ENCODE measurements at regions of chr11 and their contacts with region 1.

Region 1: DNA sequence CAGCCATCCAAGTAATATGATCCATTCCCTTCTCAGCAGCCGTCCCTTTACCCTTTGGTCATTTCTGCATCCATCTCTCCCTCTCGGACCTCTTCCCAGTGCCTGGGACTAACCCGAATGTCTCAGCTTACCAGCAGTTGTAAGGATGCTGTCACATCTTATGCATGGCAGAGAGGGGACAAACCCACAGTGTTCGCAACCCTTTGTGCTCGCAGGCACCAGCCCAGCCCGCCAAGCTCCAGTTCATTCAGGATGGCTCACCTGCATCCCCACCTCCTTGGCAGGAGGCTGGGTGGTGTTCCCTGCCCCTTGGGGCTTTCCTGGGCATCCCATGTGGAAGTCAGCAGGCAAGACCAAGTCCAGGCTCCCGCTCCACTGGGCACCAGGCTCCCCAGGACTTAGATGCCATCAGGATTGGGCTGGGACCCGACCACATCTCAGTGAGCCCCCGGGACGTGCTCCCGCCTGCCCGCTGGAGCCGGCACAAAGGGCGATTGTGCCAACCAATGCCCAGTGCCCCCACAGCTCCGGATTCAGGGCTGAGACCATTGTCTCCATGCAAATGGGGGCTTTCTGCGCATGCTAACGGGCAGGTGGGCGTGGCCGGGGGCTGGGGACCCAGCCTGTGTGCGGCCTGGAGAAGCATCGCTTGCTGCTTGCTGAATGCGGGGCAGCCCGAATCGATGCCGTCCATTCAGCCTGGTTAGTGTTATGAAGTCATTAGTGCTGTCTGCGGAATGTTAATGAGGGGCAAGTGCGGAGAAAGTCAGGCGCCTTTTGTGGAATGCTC is 108.6 kb downstream of the KCNQ1OT1 start:
- DNase-seq: no peak
- H3K4me3 ChIP-seq: no peak overlapping the region
- H3K27ac ChIP-seq: no peak overlapping the region
- H3K4me1 ChIP-seq: no peaks in the 10 kb centered on the region
- H3K27me3 ChIP-seq: no peaks in the 10 kb centered on the region
- CTCF ChIP-seq: no peak
- POLR2A ChIP-seq: no peak

Region 2: DNA sequence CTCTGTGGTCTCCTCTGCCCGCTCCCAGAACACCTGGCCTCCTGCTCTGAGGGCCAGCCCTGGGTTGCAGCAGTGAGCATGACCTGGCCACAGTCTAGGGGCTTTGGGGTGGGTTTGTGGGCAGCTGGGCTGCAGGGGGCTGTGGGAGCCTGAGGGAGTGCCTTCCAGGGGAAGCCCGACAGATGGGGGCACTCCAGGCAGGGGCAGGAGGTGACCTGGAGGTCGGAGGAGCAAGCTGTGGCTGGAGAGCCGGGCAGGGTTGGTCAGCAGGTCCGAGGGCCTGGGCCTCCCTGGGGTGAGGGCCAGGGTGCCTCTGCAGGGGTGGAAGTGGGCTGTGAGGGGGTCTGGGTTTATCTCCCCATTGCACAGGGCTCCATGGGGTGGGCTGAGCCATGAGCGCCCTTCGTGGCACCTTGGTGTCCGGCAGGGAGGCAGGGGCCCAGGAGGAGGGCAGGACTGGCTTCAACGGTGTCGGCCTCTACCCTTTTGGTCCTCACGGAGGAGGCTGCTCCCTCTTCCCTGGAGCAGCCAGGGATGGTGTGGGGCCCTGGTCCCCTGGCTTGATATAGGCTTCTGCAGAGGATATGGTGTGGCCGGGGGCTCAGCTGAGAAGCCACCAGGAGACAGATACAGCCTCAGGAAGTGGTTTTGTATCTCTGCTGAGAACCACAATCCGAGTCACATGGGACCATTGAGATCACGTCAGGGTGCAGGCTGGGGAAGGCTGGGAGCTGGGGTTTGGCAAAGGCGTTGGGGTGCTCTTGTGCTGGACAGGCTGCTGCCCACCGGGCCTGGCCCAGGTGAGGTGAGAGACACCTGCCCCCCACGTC is 124.1 kb before region 1 on chr11:
- intact Hi-C with region 1: loop called (anchors 10 kb)
- DNase-seq: no peak
- H3K4me3 ChIP-seq: no peak overlapping the region
- H3K27ac ChIP-seq: no peak overlapping the region
- H3K4me1 ChIP-seq: peaks cover 3% of the 10 kb centered on the region
- H3K27me3 ChIP-seq: no peaks in the 10 kb centered on the region
- CTCF ChIP-seq: no peak
- POLR2A ChIP-seq: no peak